CD4-positive, alpha-beta T cell (primary cell): ENCODE measurements at regions of chr6 and their contacts with region 1.

Region 1: GRCh38 chr6:142902636-142903053 is 42.3 kb downstream of the HIVEP2 start:
- DNase-seq: peak; percentile 55 to 95 (median 70)
- ATAC-seq: peak; percentile 57
- H3K4me3 ChIP-seq: peak overlapping the region; percentile 62
- H3K4me3 Mint-ChIP-seq: peak overlapping the region; percentile 81
- H3K27ac ChIP-seq: peak overlapping the region; percentile 86 to 93
- H3K27ac Mint-ChIP-seq: no peak overlapping the region
- H3K4me1 ChIP-seq: peaks cover 40% of the 10 kb centered on the region
- H3K4me1 Mint-ChIP-seq: peaks cover 26% of the 10 kb centered on the region
- H3K27me3 ChIP-seq: no peaks in the 10 kb centered on the region
- H3K27me3 Mint-ChIP-seq: no peaks in the 10 kb centered on the region
- CTCF ChIP-seq: no peak

Region 2: DNA sequence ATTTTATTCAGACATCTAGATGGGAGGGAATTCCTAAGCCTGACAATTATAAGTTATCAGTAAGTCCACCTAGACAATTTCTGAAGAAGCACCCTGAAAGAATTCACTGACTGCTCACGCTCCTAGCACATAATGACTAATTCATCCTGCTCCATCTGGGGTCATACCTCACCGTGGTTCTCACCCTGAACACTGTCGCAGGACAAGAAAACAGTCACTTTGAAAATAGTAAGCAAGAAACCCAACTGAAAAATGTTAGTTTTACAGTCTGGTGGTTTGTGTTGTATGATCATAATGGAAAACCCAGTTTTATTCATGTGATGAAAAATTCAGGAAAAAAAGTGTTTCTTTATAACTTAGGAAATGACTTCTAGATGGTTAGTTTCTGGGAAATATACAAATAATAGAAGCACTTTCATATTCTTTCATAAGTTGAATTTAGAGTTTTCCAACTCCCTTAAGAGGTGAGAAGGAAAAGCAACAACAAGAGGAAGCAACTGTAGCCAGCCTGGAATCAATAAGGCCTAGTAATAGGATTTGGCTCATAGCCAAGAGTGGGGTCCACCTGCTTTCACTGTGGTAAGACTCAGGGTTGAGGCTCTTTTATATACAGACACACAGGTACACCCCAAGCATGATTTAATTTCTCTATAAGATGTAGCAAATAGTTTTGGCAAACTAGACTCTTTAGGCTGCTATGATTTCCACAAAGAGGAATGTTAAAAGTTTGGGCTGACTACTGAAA is 51.8 kb before region 1 on chr6:
- CTCF ChIA-PET with region 1: no interaction called
- POLR2A ChIA-PET with region 1: interaction called, 42 read pairs
- intact Hi-C with region 1: loop called (anchors 2 to 5 kb)
- DNase-seq: peak in 6 of 14 experiments; percentile 30 to 73 (median 63)
- ATAC-seq: peak; percentile 33
- H3K4me3 ChIP-seq: peak overlapping the region; percentile 2
- H3K4me3 Mint-ChIP-seq: peak overlapping the region; percentile 84
- H3K27ac ChIP-seq: peak overlapping the region; percentile 10 to 43
- H3K27ac Mint-ChIP-seq: peak overlapping the region; percentile 94
- H3K4me1 ChIP-seq: peaks cover 64% of the 10 kb centered on the region
- H3K4me1 Mint-ChIP-seq: peaks cover 96% of the 10 kb centered on the region
- H3K27me3 ChIP-seq: no peaks in the 10 kb centered on the region
- H3K27me3 Mint-ChIP-seq: no peaks in the 10 kb centered on the region
- CTCF ChIP-seq: no peak

Region 3: DNA sequence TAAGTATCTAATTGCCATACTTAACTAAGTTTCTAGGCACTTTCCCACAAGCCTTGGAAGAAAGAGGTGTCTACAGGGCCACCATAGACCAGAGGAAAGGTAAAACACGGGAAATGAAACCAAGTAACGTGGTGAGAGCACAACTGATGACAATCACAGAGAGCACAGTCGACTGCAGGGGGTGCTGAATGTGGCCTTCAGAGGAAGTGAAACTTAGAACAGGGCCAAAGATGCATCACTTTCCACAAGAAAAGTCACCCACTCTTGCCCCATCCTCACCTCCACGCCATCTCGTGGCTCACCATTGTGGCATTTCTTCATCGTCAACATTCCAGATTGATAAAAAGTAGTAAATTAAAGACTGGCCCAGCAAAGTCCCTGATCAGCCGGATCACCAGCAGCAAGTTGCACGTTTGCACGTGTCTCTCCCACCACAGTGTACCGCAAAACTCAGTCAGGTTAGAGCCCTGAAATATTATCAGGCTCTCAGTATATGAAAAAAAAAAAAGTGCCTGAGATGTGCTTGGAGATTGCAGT is 10.9 kb after region 1 on chr6:
- CTCF ChIA-PET with region 1: interaction called, 3 read pairs
- POLR2A ChIA-PET with region 1: interaction called, 20 read pairs
- intact Hi-C with region 1: loop called in 1 of 2 experiments (anchors 1 kb)
- DNase-seq: peak; percentile 51 to 91 (median 64)
- ATAC-seq: peak; percentile 93
- H3K4me3 ChIP-seq: peak overlapping the region; percentile 41
- H3K4me3 Mint-ChIP-seq: peak overlapping the region; percentile 88
- H3K27ac ChIP-seq: peak overlapping the region; percentile 88 to 90
- H3K27ac Mint-ChIP-seq: peak overlapping the region; percentile 96
- H3K4me1 ChIP-seq: peaks cover 63% of the 10 kb centered on the region
- H3K4me1 Mint-ChIP-seq: peaks cover 89% of the 10 kb centered on the region
- H3K27me3 ChIP-seq: no peaks in the 10 kb centered on the region
- H3K27me3 Mint-ChIP-seq: no peaks in the 10 kb centered on the region
- CTCF ChIP-seq: peak; percentile 42